ENCODE measurements at regions of chr1 and their contacts with region 1.

Region 1: GRCh38 chr1:183915625-183916510 is 110.9 kb downstream of the RGL1 start:
- DNase-seq: peak; percentile 78 to 79 (median 78)
- ATAC-seq: peak; percentile 86 to 88
- H3K4me3 ChIP-seq: no peak overlapping the region
- H3K27ac ChIP-seq: peak overlapping the region; percentile 93
- H3K4me1 ChIP-seq: peaks cover 4% of the 10 kb centered on the region
- H3K27me3 ChIP-seq: no peaks in the 10 kb centered on the region

Region 2: DNA sequence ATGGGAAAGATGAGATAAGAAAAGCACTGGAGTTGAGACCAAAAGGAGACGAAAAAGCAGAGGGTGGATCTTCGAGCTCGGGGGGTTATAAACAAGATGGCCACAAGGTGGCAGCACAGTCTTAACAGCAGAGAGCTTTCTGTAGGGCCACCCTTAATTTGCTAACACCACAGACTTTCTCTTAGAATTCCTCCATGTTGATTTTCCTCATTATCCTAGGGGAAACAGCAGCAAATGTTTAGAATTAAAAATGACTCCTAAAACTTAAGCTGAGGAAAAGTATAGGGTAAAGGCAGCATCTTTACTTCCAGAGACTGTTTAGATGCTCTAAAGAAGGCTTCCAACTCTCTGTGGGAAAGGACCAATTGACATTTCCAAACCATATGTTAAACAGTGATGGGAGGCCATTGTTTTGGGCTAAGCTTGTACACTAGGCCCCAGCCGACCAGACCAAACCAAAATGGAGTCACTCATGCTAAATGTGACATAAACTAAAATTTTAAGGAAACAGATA is 260.2 kb before region 1 on chr1:
- intact Hi-C with region 1: loop called (anchors 2 to 5 kb)
- DNase-seq: peak; percentile 80 to 93 (median 84)
- ATAC-seq: peak; percentile 80 to 87
- H3K4me3 ChIP-seq: no peak overlapping the region
- H3K27ac ChIP-seq: no peak overlapping the region
- H3K4me1 ChIP-seq: no peaks in the 10 kb centered on the region
- H3K27me3 ChIP-seq: no peaks in the 10 kb centered on the region

Region 3: GRCh38 chr1:183804881-183805841 is 110.7 kb before region 1 on chr1 and contains the start of gene RGL1:
- intact Hi-C with region 1: loop called in 1 of 4 experiments (anchors 10 kb)
- DNase-seq: peak; percentile 80 to 91 (median 86)
- ATAC-seq: peak; percentile 95 to 98
- H3K4me3 ChIP-seq: peak within 1 kb of the TSS; percentile 83
- H3K27ac ChIP-seq: peak within 1 kb of the TSS; percentile 82
- H3K4me1 ChIP-seq: peaks cover 5% of the 10 kb centered on the region
- H3K27me3 ChIP-seq: no peaks in the 10 kb centered on the region
- total RNA-seq, gene RGL1: 16.3 to 22.9 (median 17.2) TPM

Measured in right cardiac atrium (tissue), 5 donors.